Left colon (tissue), 2 donors: ENCODE measurements at regions of chr14 and their contacts with region 1.

Region 1: DNA sequence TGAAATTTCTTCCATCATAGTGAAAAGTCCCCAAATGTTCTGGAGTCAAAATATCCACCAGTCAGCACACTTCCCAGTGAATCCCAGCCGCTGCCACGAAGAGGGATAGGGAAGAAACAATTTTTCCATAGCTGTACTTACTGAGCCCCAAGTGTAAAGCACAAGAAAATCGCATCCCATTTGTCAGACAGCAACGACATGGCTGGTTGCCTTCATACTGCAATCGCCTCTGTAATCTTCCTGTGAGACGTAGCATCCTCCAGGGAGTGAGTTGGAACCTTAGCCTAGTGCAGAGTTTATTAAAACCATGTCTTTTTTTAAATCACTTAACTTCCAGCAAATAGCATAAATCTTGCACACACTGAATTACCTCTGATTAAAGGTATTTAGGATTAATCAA is 56.8 kb downstream of the GNG2 start:
- DNase-seq: no peak
- ATAC-seq: no peak

Region 2: GRCh38 chr14:51759950-51760349 is 157.2 kb before region 1 on chr14:
- intact Hi-C with region 1: no loop called
- DNase-seq: no peak
- ATAC-seq: no peak

Region 3: GRCh38 chr14:52021957-52022600 is 104.9 kb after region 1 on chr14:
- intact Hi-C with region 1: no loop called
- DNase-seq: no peak
- ATAC-seq: no peak

Region 4: DNA sequence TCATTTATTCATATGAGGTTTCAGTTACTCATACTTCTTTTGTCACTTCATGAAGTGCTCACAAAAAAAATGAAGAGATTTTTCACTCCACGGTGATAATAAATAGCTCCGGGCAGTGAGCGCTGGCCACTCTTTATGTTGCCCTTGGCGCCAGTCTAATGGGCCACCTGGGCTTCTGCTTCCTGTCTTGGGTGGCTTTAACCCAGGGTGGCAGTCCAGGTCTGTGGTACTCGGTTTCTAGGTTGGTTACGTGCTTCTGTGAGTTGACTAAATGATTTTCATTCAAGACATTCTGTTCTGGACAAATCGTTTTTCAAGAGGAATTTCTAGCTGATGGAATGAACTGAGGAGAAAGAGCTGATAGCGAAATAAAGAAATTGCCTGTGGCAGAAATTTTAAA is 186.2 kb after region 1 on chr14:
- intact Hi-C with region 1: no loop called
- DNase-seq: no peak
- ATAC-seq: no peak

Region 5: DNA sequence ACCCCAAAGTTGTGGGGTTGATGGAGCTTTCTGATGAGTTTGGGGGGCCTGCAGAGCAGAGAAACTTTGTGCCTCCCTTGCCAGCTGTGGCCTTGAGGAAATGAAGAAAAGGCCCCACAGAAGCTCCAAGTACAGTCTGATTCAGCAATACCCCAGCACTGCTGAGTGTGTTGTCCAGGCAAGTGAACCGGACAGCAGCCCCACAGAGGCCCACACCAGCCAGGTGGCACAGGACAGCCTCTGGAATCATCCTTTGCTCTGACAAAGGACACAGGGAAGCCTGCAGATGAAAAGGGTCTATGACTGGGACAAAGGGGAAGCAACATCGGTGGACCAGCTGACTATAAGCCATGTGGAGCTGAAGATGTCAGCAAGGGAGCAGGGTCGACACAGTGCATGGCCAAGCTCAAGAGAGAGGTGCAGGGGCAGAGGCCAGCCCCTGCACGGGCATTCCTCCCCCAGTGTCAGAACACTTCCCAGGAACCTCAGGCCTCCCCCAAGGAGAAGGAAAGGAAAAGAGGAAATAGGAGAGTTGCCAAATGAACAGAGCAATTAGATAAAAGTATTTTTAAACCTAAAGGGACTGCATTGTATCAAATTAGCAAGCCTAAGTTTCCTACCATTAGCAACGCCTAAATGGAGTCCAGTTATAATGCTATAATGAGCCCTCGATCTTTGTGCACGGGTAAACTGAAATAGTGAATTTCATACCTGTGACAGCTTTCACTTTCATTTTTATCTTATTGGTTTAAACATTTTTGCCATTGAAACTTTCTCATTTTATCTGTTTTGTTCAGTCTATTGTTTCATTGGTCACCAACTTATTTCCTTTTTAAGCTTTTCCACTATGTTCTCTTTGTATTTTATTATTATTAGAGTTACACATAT is 304.0 kb after region 1 on chr14:
- intact Hi-C with region 1: loop called in 1 of 2 experiments (anchors 10 kb)
- DNase-seq: no peak
- ATAC-seq: peak; percentile 69